OCI-LY7 (cell line): ENCODE measurements at regions of chr14 and their contacts with region 1.

Region 1: GRCh38 chr14:55212634-55213033 is 21.2 kb upstream of the DLGAP5 start:
- DNase-seq: no peak
- H3K4me3 ChIP-seq: no peak overlapping the region
- H3K27ac ChIP-seq: no peak overlapping the region
- H3K4me1 ChIP-seq: no peaks in the 10 kb centered on the region
- CTCF ChIP-seq: no peak

Region 2: GRCh38 chr14:55430024-55430690 is 217.5 kb after region 1 on chr14:
- CTCF ChIA-PET with region 1: no interaction called
- POLR2A ChIA-PET with region 1: no interaction called
- intact Hi-C with region 1: loop called (anchors 1 kb)
- DNase-seq: peak; percentile 80
- H3K4me3 ChIP-seq: no peak overlapping the region
- H3K27ac ChIP-seq: no peak overlapping the region
- H3K4me1 ChIP-seq: peaks cover 7% of the 10 kb centered on the region
- CTCF ChIP-seq: peak; percentile 77